CD4-positive, alpha-beta T cell (primary cell): ENCODE measurements at regions of chr6 and their contacts with region 1.

Region 1: GRCh38 chr6:2848851-2849250 is 7.2 kb upstream of the SERPINB1 start:
- DNase-seq: peak; percentile 48 to 92 (median 72)
- ATAC-seq: peak; percentile 96
- H3K4me3 ChIP-seq: no peak overlapping the region
- H3K4me3 Mint-ChIP-seq: peak overlapping the region; percentile 72
- H3K27ac ChIP-seq: peak overlapping the region in 1 of 2 donors; percentile 27
- H3K27ac Mint-ChIP-seq: peak overlapping the region; percentile 90
- H3K4me1 ChIP-seq: peaks cover 41% of the 10 kb centered on the region
- H3K4me1 Mint-ChIP-seq: peaks cover 49% of the 10 kb centered on the region
- H3K27me3 ChIP-seq: no peaks in the 10 kb centered on the region
- H3K27me3 Mint-ChIP-seq: no peaks in the 10 kb centered on the region
- CTCF ChIP-seq: no peak

Region 2: DNA sequence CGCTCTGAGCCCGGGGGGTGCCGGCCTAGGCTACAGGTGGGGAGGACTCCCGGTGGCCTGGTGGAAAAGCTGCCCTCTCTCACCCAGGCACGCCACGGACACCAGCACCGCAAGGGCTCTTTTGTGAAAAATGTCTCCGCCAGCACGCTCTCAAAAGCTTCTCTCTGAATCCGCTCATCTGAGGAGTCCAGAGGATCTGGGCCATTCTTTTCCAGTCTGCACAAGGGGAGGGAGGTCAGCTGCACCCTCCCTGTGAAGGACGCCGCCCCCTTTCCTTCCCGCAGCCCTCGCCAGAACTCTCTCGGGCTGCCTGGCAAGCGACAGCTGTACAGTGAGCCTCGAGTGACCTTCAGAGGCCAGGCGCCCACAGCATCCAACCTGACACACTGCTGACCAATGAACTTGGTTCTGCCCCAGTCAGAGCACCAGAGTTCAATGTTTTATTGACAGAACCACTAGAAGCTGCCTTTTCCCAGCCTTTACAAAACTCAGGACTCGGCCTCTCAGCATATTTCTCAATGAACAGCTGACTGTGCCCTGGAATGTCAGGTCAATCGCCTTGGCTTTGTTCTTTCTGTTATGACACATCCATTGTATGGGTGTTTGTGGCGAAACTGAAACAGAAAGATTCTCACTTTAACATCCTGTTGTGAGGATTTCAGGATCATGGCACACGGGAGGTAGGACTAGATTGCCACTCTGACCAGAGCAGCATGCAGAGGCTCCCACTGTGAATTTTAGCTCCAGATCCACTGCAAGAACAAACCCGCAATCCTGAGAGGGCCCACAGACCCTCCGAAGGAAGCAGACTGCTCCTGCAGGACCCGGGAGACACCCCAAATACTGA is 27.6 kb after region 1 on chr6:
- CTCF ChIA-PET with region 1: interaction called, 3 read pairs
- POLR2A ChIA-PET with region 1: interaction called, 14 read pairs
- intact Hi-C with region 1: no loop called
- DNase-seq: peak in 4 of 14 experiments; percentile 23 to 68 (median 62)
- ATAC-seq: no peak
- H3K4me3 ChIP-seq: peak overlapping the region; percentile 44
- H3K4me3 Mint-ChIP-seq: peak overlapping the region; percentile 95
- H3K27ac ChIP-seq: peak overlapping the region; percentile 73 to 79
- H3K27ac Mint-ChIP-seq: peak overlapping the region; percentile 87
- H3K4me1 ChIP-seq: peaks cover 63% of the 10 kb centered on the region
- H3K4me1 Mint-ChIP-seq: peaks cover 80% of the 10 kb centered on the region
- H3K27me3 ChIP-seq: no peaks in the 10 kb centered on the region
- H3K27me3 Mint-ChIP-seq: no peaks in the 10 kb centered on the region
- CTCF ChIP-seq: no peak

Region 3: GRCh38 chr6:2900821-2901644 is 52.2 kb after region 1 on chr6:
- CTCF ChIA-PET with region 1: interaction called, 11 read pairs
- POLR2A ChIA-PET with region 1: interaction called, 26 read pairs
- intact Hi-C with region 1: no loop called
- DNase-seq: peak in 2 of 14 experiments; percentile 6 to 26
- ATAC-seq: no peak
- H3K4me3 ChIP-seq: peak overlapping the region; percentile 95
- H3K4me3 Mint-ChIP-seq: peak overlapping the region; percentile 100
- H3K27ac ChIP-seq: peak overlapping the region; percentile 9 to 69
- H3K27ac Mint-ChIP-seq: peak overlapping the region; percentile 99
- H3K4me1 ChIP-seq: peaks cover 50% of the 10 kb centered on the region
- H3K4me1 Mint-ChIP-seq: peaks cover 63% of the 10 kb centered on the region
- H3K27me3 ChIP-seq: no peaks in the 10 kb centered on the region
- H3K27me3 Mint-ChIP-seq: no peaks in the 10 kb centered on the region
- CTCF ChIP-seq: no peak

Region 4: DNA sequence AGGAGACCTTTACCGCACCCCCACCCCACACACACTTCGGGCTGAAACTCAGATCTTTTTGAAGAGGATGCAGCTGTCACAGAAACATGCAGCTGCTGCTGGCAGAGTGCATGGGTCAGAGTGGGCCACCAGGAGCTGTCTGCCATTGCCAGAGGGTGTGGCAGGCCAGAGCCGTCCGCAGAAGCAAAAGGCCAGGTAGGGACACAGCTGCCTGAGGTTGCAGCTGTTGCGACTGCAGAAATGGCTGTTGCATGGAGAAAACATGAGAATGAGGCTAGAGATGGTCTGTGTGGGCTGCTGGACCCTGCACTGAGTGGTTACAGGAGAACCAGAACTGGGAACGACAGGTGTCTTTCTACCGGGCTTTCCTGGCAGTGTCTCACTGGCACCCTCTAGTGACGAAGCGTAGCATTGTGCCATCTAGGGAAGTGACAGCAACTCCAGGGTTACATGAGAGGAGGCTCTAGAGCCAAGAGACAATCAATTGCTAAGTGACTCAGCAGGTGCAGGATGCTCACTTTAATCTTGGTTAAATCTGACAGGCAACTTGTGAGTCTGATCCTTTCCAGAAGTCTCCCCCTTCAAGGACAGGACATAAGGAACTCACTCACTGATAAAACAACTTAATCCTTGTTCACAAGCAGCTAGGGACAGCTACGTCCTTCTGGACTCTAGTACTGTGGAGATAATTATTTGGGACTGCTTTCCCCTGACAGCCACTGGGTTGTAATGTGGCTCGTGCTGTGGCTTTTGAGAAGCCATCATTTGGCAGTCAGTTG is 83.3 kb after region 1 on chr6:
- CTCF ChIA-PET with region 1: interaction called, 33 read pairs
- POLR2A ChIA-PET with region 1: interaction called, 10 read pairs
- intact Hi-C with region 1: loop called (anchors 1 kb)
- DNase-seq: peak; percentile 77 to 93 (median 86)
- ATAC-seq: peak; percentile 98
- H3K4me3 ChIP-seq: no peak overlapping the region
- H3K4me3 Mint-ChIP-seq: peak overlapping the region; percentile 0
- H3K27ac ChIP-seq: no peak overlapping the region
- H3K27ac Mint-ChIP-seq: no peak overlapping the region
- H3K4me1 ChIP-seq: peaks cover 16% of the 10 kb centered on the region
- H3K4me1 Mint-ChIP-seq: peaks cover 18% of the 10 kb centered on the region
- H3K27me3 ChIP-seq: no peaks in the 10 kb centered on the region
- H3K27me3 Mint-ChIP-seq: no peaks in the 10 kb centered on the region
- CTCF ChIP-seq: peak; percentile 96

Region 5: GRCh38 chr6:3061501-3061941 is 212.7 kb after region 1 on chr6:
- CTCF ChIA-PET with region 1: no interaction called
- POLR2A ChIA-PET with region 1: no interaction called
- intact Hi-C with region 1: loop called (anchors 2 to 5 kb)
- DNase-seq: no peak
- ATAC-seq: no peak
- H3K4me3 ChIP-seq: no peak overlapping the region
- H3K4me3 Mint-ChIP-seq: no peak overlapping the region
- H3K27ac ChIP-seq: no peak overlapping the region
- H3K27ac Mint-ChIP-seq: no peak overlapping the region
- H3K4me1 ChIP-seq: peaks cover 15% of the 10 kb centered on the region
- H3K4me1 Mint-ChIP-seq: peaks cover 34% of the 10 kb centered on the region
- H3K27me3 ChIP-seq: no peaks in the 10 kb centered on the region
- H3K27me3 Mint-ChIP-seq: no peaks in the 10 kb centered on the region
- CTCF ChIP-seq: no peak